ENCODE measurements at regions of chr2 and their contacts with region 1.

Region 1: DNA sequence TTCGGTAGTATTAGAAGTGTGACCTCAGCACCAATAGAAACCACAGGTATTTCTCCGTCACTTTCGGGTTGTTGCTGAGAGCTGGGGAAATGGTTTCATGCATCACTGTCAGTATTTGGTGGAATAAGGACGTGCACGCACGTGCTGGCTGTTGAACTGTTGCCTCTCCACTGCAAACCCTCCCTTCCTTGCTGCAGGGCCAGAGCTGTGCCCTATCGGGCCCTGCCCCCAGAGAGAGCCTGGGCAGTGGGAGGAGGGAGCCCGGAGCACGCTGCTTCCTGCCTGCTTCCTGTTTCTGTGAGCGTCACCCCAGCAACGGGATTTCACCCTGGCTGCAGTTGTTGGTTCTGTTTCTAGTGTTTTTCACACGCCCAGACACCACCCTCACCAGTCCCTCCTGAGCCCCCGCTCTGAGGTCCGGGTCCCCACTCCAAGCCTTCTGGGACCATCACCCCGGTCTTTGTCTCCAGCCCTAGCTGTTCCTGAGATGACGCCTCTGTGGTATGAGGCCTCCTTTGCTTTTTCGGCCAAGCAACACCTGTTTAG is 47.4 kb downstream of the LRRFIP1 start:
- DNase-seq: peak; percentile 88
- ATAC-seq: peak; percentile 67
- H3K4me3 Mint-ChIP-seq: peak overlapping the region; percentile 73
- H3K27ac Mint-ChIP-seq: peak overlapping the region; percentile 93
- H3K4me1 Mint-ChIP-seq: peaks cover 43% of the 10 kb centered on the region
- H3K27me3 Mint-ChIP-seq: no peaks in the 10 kb centered on the region
- CTCF ChIP-seq: no peak

Region 2: GRCh38 chr2:237691908-237692600 is 17.2 kb after region 1 on chr2:
- CTCF ChIA-PET with region 1: interaction called, 142 read pairs
- POLR2A ChIA-PET with region 1: interaction called, 154 read pairs
- intact Hi-C with region 1: loop called (anchors 2 kb)
- DNase-seq: peak; percentile 95
- ATAC-seq: peak; percentile 68
- H3K4me3 Mint-ChIP-seq: peak overlapping the region; percentile 98
- H3K27ac Mint-ChIP-seq: peak overlapping the region; percentile 93
- H3K4me1 Mint-ChIP-seq: peaks cover 52% of the 10 kb centered on the region
- H3K27me3 Mint-ChIP-seq: no peaks in the 10 kb centered on the region
- CTCF ChIP-seq: no peak

Region 3: GRCh38 chr2:237700512-237701032 is 25.8 kb after region 1 on chr2:
- CTCF ChIA-PET with region 1: interaction called, 142 read pairs
- POLR2A ChIA-PET with region 1: interaction called, 154 read pairs
- intact Hi-C with region 1: loop called (anchors 2 kb)
- DNase-seq: peak; percentile 92
- ATAC-seq: peak; percentile 67
- H3K4me3 Mint-ChIP-seq: peak overlapping the region; percentile 67
- H3K27ac Mint-ChIP-seq: peak overlapping the region; percentile 98
- H3K4me1 Mint-ChIP-seq: peaks cover 93% of the 10 kb centered on the region
- H3K27me3 Mint-ChIP-seq: no peaks in the 10 kb centered on the region
- CTCF ChIP-seq: no peak

Region 4: DNA sequence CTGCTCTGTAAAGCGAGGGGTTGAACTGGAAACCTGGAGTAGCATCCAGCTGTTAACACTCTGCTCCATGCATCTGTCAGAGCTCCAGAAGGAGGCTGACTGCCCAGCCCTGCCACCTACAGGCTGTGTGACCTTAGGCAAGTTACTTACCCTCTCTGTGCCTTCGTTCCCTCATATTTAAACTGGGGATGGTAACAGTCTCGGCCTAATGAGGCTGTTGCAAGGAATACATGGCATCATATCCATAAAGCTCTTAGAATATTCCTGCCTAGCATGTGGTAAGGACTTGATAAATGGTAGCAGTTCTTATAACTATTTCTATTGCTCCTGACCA is 33.2 kb after region 1 on chr2:
- CTCF ChIA-PET with region 1: interaction called, 35 read pairs
- POLR2A ChIA-PET with region 1: interaction called, 30 read pairs
- intact Hi-C with region 1: loop called (anchors 5 kb)
- DNase-seq: no peak
- ATAC-seq: no peak
- H3K4me3 Mint-ChIP-seq: no peak overlapping the region
- H3K27ac Mint-ChIP-seq: no peak overlapping the region
- H3K4me1 Mint-ChIP-seq: peaks cover 62% of the 10 kb centered on the region
- H3K27me3 Mint-ChIP-seq: no peaks in the 10 kb centered on the region
- CTCF ChIP-seq: no peak

Region 5: DNA sequence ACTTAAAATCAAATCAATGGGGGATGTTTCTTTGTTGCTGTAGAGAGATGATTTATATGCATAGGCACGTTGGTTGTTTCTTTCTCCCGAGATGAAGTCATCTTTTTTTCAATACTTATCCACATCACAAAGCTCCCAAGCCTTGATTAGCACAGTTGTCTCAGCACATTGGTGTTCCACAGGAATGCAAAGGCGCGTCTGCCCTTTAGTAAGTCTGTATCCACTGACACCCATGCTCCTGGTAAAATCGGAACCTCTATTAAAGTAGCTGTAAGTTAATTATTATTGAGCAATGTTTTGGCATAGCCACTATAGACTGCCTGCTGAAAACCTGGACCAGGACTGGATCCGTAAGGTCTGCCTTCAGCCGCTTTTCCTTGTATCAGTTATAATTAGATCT is 46.2 kb after region 1 on chr2:
- CTCF ChIA-PET with region 1: interaction called, 11 read pairs
- POLR2A ChIA-PET with region 1: no interaction called
- intact Hi-C with region 1: no loop called
- DNase-seq: no peak
- ATAC-seq: no peak
- H3K4me3 Mint-ChIP-seq: no peak overlapping the region
- H3K27ac Mint-ChIP-seq: no peak overlapping the region
- H3K4me1 Mint-ChIP-seq: peaks cover 57% of the 10 kb centered on the region
- H3K27me3 Mint-ChIP-seq: no peaks in the 10 kb centered on the region
- CTCF ChIP-seq: no peak

Region 6: GRCh38 chr2:237731663-237732062 is 56.9 kb after region 1 on chr2:
- CTCF ChIA-PET with region 1: interaction called, 14 read pairs
- POLR2A ChIA-PET with region 1: interaction called, 4 read pairs
- intact Hi-C with region 1: no loop called
- DNase-seq: peak; percentile 76
- ATAC-seq: peak; percentile 96
- H3K4me3 Mint-ChIP-seq: peak overlapping the region; percentile 26
- H3K27ac Mint-ChIP-seq: peak overlapping the region; percentile 82
- H3K4me1 Mint-ChIP-seq: peaks cover 57% of the 10 kb centered on the region
- H3K27me3 Mint-ChIP-seq: no peaks in the 10 kb centered on the region
- CTCF ChIP-seq: no peak

Region 7: GRCh38 chr2:237774802-237775553 is 100.2 kb after region 1 on chr2:
- CTCF ChIA-PET with region 1: interaction called, 12 read pairs
- POLR2A ChIA-PET with region 1: no interaction called
- intact Hi-C with region 1: no loop called
- DNase-seq: peak; percentile 65
- ATAC-seq: peak; percentile 83
- H3K4me3 Mint-ChIP-seq: no peak overlapping the region
- H3K27ac Mint-ChIP-seq: no peak overlapping the region
- H3K4me1 Mint-ChIP-seq: no peaks in the 10 kb centered on the region
- H3K27me3 Mint-ChIP-seq: no peaks in the 10 kb centered on the region
- CTCF ChIP-seq: peak; percentile 78

Region 8: GRCh38 chr2:237955640-237956401 is 281.0 kb after region 1 on chr2:
- CTCF ChIA-PET with region 1: no interaction called
- POLR2A ChIA-PET with region 1: no interaction called
- intact Hi-C with region 1: no loop called
- DNase-seq: peak; percentile 30
- ATAC-seq: peak; percentile 72
- H3K4me3 Mint-ChIP-seq: no peak overlapping the region
- H3K27ac Mint-ChIP-seq: no peak overlapping the region
- H3K4me1 Mint-ChIP-seq: peaks cover 10% of the 10 kb centered on the region
- H3K27me3 Mint-ChIP-seq: peaks cover 21% of the 10 kb centered on the region
- CTCF ChIP-seq: no peak

Measured in activated CD8-positive, alpha-beta T cell treated with anti-CD3 and anti-CD28 coated beads for 36 hours (primary cell).